ENCODE measurements at regions of chr4 and their contacts with region 1.

Region 1: GRCh38 chr4:111854494-111855087 is 290.7 kb upstream of the FAM241A start:
- DNase-seq: peak; percentile 74
- H3K4me3 ChIP-seq: no peak overlapping the region
- H3K27ac ChIP-seq: no peak overlapping the region
- H3K4me1 ChIP-seq: no peaks in the 10 kb centered on the region; the same call in 1 of the 2 replicates
- H3K27me3 ChIP-seq: no peaks in the 10 kb centered on the region

Region 2: GRCh38 chr4:111530446-111530845 is 324.1 kb before region 1 on chr4:
- in situ Hi-C with region 1: no loop called
- DNase-seq: no peak
- H3K4me3 ChIP-seq: no peak overlapping the region
- H3K27ac ChIP-seq: no peak overlapping the region
- H3K4me1 ChIP-seq: no peaks in the 10 kb centered on the region
- H3K27me3 ChIP-seq: no peaks in the 10 kb centered on the region

Region 3: GRCh38 chr4:111641955-111642579 is 212.5 kb before region 1 on chr4:
- in situ Hi-C with region 1: loop called (anchors 5 kb)
- DNase-seq: peak; percentile 95
- H3K4me3 ChIP-seq: no peak overlapping the region
- H3K27ac ChIP-seq: no peak overlapping the region
- H3K4me1 ChIP-seq: peaks cover 31% of the 10 kb centered on the region
- H3K27me3 ChIP-seq: no peaks in the 10 kb centered on the region

Region 4: GRCh38 chr4:111905511-111905910 is 50.9 kb after region 1 on chr4:
- in situ Hi-C with region 1: loop called (anchors 5 kb)
- DNase-seq: no peak
- H3K4me3 ChIP-seq: no peak overlapping the region
- H3K27ac ChIP-seq: no peak overlapping the region
- H3K4me1 ChIP-seq: no peaks in the 10 kb centered on the region
- H3K27me3 ChIP-seq: no peaks in the 10 kb centered on the region